Lower lobe of right lung (tissue), 2 donors: ENCODE measurements at regions of chr17 and their contacts with region 1.

Region 1: GRCh38 chr17:29807520-29808351 is 122.3 kb downstream of the SSH2 start:
- DNase-seq: peak; percentile 70
- ATAC-seq: peak; percentile 92 to 93
- H3K4me3 ChIP-seq: peak overlapping the region; percentile 37
- H3K27ac ChIP-seq: peak overlapping the region; percentile 57
- H3K4me1 ChIP-seq: no peaks in the 10 kb centered on the region
- H3K27me3 ChIP-seq: no peaks in the 10 kb centered on the region
- CTCF ChIP-seq: peak; percentile 82

Region 2: DNA sequence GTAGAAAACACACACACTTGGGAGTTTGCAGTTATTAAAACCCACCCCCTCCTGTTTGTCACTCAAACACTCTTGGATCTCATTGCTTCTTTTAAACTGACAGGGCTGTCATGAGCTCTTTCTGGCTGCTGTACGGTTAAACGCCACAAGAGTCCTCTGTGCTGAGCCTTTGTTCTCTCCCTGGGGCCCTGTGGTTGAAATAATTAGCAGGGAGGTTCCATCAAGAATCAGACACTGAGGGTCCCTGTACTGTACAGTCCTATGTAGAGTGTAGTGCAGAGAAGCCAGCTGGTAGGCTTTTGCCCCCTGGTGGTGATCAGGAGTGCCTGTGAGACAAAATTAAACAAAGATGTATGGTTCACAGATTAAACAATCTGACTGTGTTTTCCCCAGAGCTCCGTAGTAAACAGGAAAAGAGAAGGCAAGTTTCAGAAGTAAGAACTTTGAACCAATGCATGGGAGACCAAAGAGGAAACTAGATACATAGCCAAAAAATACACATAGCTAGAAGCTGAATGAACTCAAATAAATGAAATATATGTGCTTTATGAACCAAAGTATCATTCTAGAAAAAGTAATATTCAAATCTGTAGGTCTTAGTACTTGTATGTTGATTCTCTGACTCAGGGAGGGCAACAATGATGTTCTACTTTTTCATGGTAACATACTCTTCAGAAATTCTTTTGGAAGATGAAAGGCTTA is 123.6 kb after region 1 on chr17:
- intact Hi-C with region 1: loop called (anchors 5 kb)
- DNase-seq: peak; percentile 63
- ATAC-seq: peak; percentile 76 to 85
- H3K4me3 ChIP-seq: peak overlapping the region; percentile 84
- H3K27ac ChIP-seq: peak overlapping the region; percentile 21
- H3K4me1 ChIP-seq: peaks cover 41% of the 10 kb centered on the region
- H3K27me3 ChIP-seq: no peaks in the 10 kb centered on the region
- CTCF ChIP-seq: peak; percentile 83